WTC11 (cell line): ENCODE measurements at regions of chr4 and their contacts with region 1.

Region 1: GRCh38 chr4:1809754-1810511 is 16.8 kb downstream of the FGFR3 start:
- DNase-seq: peak; percentile 90
- ATAC-seq: peak; percentile 91
- H3K4me3 Mint-ChIP-seq: no peak overlapping the region
- H3K27ac Mint-ChIP-seq: no peak overlapping the region
- H3K4me1 Mint-ChIP-seq: no peaks in the 10 kb centered on the region
- H3K27me3 Mint-ChIP-seq: no peaks in the 10 kb centered on the region
- CTCF ChIP-seq: peak; percentile 92

Region 2: DNA sequence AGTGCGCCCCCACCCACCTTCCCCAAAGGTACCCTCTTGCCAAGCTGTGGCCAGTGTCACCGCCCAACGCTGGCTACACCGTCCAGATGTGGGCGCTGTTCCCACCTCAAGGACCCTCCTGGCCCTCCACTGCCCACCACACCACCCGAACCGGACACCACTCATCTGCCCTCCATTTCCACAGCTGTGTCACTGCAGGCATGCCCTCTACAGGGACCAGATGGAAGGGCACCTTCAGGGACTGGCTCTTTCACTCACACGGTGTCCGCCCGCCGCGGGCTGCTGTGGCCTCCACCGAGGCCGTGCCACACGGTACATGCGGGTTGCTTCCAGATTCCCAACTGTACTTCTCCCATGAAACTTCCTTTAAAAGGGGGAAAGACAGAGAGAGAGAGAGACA is 213.5 kb before region 1 on chr4:
- CTCF ChIA-PET with region 1: no interaction called
- POLR2A ChIA-PET with region 1: no interaction called
- DNase-seq: no peak
- ATAC-seq: peak; percentile 38
- H3K4me3 Mint-ChIP-seq: no peak overlapping the region
- H3K27ac Mint-ChIP-seq: no peak overlapping the region
- H3K4me1 Mint-ChIP-seq: peaks cover 4% of the 10 kb centered on the region; the same call in 1 of the 2 replicates
- H3K27me3 Mint-ChIP-seq: no peaks in the 10 kb centered on the region; the same call in 1 of the 2 replicates
- CTCF ChIP-seq: no peak

Region 3: DNA sequence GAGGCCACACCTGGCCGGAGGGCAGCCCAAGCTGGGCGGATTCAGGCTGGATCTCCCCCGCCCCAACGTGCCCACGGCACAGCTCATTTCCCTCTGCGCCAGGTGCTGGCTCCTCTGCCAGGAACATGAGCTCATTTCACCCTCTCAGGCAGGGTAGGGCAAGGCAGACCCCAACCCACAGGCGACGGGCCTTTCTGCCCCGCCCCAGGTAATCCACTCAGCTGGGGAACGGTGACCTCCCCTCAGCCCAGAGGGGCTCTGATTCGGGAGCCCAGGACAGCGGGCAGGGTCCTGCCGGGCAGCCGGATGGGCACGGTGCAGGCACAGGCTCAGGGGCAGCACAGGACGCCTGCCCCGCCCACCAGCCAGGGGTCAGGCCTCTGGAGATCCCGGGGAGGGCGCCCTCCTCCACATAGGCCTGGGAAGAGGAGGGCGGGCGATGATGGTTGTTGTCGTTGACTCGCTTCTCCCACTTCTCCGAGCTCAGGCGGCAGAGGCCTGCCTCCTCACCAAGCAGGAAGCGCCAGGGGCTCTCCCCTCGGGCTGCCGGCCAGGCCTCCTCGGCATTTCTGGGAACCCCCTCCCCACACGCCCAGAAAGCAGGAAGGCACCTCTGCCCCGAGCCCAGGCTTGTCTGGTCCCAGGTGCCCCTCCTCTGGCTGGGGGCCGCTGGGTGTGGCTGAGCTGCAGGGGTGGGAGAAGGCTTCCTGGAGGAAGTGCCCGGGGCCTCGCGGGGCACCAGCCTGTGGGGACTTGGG is 57.5 kb before region 1 on chr4:
- CTCF ChIA-PET with region 1: interaction called, 188 read pairs
- POLR2A ChIA-PET with region 1: interaction called, 3 read pairs
- DNase-seq: no peak
- ATAC-seq: peak; percentile 25
- H3K4me3 Mint-ChIP-seq: no peak overlapping the region
- H3K27ac Mint-ChIP-seq: no peak overlapping the region
- H3K4me1 Mint-ChIP-seq: no peaks in the 10 kb centered on the region
- H3K27me3 Mint-ChIP-seq: peaks cover 2% of the 10 kb centered on the region; the same call in 1 of the 2 replicates
- CTCF ChIP-seq: no peak

Region 4: GRCh38 chr4:1759818-1760223 is 50.1 kb before region 1 on chr4:
- CTCF ChIA-PET with region 1: interaction called, 45 read pairs
- POLR2A ChIA-PET with region 1: no interaction called
- DNase-seq: no peak
- ATAC-seq: peak; percentile 4; the same call in 1 of the 2 replicates
- H3K4me3 Mint-ChIP-seq: no peak overlapping the region
- H3K27ac Mint-ChIP-seq: no peak overlapping the region
- H3K4me1 Mint-ChIP-seq: no peaks in the 10 kb centered on the region
- H3K27me3 Mint-ChIP-seq: no peaks in the 10 kb centered on the region
- CTCF ChIP-seq: no peak

Region 5: GRCh38 chr4:1792832-1793495 is 17.0 kb before region 1 on chr4 and contains the start of gene FGFR3:
- CTCF ChIA-PET with region 1: interaction called, 11 read pairs
- POLR2A ChIA-PET with region 1: no interaction called
- DNase-seq: peak; percentile 78
- ATAC-seq: peak; percentile 71
- H3K4me3 Mint-ChIP-seq: peak within 1 kb of the TSS; percentile 54
- H3K27ac Mint-ChIP-seq: no peak within 1 kb of the TSS
- H3K4me1 Mint-ChIP-seq: no peaks in the 10 kb centered on the region
- H3K27me3 Mint-ChIP-seq: peaks cover 51% of the 10 kb centered on the region
- CTCF ChIP-seq: no peak
- total RNA-seq, gene FGFR3: 18.2 to 19.9 TPM (median 19.7 TPM) in 3 replicates

Region 6: DNA sequence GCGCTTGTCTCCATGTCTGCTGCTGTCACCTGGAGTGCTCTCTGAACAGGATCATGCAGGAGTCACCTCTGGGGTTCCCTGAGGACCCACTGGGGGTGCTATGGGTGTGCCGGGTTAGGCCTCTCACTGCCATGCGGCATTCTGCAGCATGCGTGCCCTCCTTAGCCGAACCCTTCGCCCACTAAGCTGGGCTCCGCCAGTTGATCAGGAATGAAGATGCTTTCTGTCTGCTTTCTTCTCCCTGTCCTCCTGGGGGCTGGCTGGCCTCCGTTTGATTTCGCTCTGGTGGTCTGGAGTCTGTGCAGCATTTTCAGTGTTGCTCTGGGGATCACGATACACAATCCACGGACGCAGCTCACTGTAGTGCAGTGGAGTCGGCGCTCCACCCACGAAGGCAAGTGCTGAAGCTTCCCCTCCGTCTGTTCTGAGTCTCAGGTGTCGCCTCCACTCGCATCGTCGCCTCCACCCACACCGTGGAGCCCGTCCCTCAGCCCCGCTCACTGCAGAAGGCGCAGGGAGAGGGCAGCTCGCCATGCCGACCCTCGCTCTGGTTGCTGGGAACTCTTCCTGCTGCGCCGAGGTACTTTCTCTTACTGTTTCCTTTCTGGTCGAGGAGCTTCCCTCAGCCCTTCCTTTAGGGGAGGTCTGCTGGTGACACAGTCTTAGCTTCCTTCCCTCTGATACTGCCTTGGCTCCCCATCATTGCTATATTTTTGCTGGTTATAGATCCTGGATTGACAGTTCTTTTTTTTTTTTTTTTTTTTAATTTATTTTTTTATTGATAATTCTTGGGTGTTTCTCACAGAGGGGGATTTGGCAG is 16.8 kb after region 1 on chr4:
- CTCF ChIA-PET with region 1: no interaction called
- POLR2A ChIA-PET with region 1: no interaction called
- DNase-seq: no peak
- ATAC-seq: no peak
- H3K4me3 Mint-ChIP-seq: no peak overlapping the region
- H3K27ac Mint-ChIP-seq: no peak overlapping the region
- H3K4me1 Mint-ChIP-seq: peaks cover 10% of the 10 kb centered on the region
- H3K27me3 Mint-ChIP-seq: peaks cover 3% of the 10 kb centered on the region
- CTCF ChIP-seq: no peak

Region 7: GRCh38 chr4:1910643-1911042 is 100.7 kb after region 1 on chr4:
- CTCF ChIA-PET with region 1: interaction called, 13 read pairs
- POLR2A ChIA-PET with region 1: no interaction called
- DNase-seq: peak; percentile 69
- ATAC-seq: peak; percentile 99
- H3K4me3 Mint-ChIP-seq: no peak overlapping the region
- H3K27ac Mint-ChIP-seq: peak overlapping the region; percentile 94
- H3K4me1 Mint-ChIP-seq: peaks cover 7% of the 10 kb centered on the region
- H3K27me3 Mint-ChIP-seq: no peaks in the 10 kb centered on the region
- CTCF ChIP-seq: peak; percentile 36; the same call in 1 of the 2 replicates

Region 8: DNA sequence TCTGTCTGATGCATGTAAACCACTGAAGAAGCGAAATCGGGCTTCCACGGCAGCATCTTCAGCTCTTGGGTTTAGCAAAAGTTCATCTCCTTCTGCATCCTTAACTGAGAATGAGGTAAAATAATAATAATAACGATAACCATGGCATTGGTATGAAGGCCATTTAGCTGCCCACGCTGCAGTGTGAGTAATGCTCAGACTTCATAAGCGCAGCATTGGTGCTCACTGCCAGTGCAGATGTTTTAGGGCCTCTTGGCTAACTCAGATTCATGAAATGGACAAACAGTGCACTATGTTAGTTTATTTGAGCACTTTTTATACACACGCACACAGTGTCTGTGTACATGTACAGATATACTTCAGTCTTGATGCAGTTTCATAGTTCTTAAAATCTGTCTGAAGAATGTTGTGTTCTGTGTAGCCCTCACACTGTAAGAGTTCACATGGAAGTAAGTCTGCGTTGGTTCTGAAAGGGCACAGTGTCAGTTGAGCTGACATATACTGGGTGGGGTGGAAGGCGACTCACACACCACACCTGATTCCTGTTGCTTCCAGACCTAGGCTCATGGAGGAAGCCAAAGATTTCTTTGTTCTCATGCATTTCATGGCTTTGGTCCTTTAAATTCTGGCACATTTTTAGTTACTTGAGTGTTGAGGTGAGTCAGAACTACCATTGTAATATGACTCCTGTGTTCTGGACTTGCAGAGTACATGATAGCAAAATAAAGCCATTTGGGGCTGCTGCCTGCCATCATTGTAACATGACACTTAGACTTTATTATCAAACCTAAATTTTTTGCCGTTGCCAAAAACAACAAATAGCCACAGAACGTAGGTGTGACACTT is 130.0 kb after region 1 on chr4:
- CTCF ChIA-PET with region 1: no interaction called
- POLR2A ChIA-PET with region 1: no interaction called
- DNase-seq: no peak
- ATAC-seq: no peak
- H3K4me3 Mint-ChIP-seq: no peak overlapping the region
- H3K27ac Mint-ChIP-seq: 0 out of 2 replicates have a peak overlapping the region, but pooled peaks have one; percentile 33
- H3K4me1 Mint-ChIP-seq: no peaks in the 10 kb centered on the region
- H3K27me3 Mint-ChIP-seq: no peaks in the 10 kb centered on the region
- CTCF ChIP-seq: no peak